ENCODE measurements at regions of chr15 and their contacts with region 1.

Region 1: DNA sequence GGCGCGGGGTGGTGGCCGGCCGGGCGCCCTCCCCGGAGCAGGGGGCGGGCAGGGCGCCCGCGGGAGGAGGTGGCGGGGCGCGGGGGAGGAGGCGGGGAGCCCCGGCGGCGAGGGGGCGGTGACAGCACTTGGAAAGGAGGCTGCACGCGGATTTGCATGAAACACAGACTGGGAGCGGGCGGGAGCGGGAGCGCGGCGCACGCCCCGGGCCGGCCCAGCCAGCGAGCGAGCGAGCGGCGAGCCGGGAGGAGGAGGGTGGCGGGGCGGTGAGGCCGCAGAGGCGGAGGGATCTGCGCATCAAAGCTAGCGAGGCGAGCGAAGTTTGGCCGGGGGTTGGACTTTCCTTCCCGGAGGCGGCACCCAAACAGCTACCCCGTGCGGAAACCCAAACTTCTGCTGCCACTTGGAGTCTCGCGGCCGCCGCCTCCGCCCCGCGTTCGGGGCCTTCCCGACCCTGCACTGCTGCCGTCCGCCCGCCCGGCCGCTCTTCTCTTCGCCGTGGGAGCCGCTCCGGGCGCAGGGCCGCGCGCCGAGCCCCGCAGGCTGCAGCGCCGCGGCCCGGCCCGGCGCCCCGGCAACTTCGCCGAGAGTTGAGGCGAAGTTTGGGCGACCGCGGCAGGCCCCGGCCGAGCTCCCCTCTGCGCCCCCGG is at the start of gene SMAD3:
- DNase-seq: peak; percentile 93
- H3K4me3 ChIP-seq: peak within 1 kb of the TSS; percentile 57 to 87 (median 83)
- H3K27ac ChIP-seq: peak within 1 kb of the TSS; percentile 89
- H3K4me1 ChIP-seq: peaks cover 31% of the 10 kb centered on the region
- H3K27me3 ChIP-seq: no peaks in the 10 kb centered on the region
- CTCF ChIP-seq: peak in 1 of 2 donors; percentile 6
- POLR2A ChIP-seq: peak; percentile 80
- total RNA-seq, gene SMAD3: 71.7 and 88.2 TPM in 2 replicates

Region 2: DNA sequence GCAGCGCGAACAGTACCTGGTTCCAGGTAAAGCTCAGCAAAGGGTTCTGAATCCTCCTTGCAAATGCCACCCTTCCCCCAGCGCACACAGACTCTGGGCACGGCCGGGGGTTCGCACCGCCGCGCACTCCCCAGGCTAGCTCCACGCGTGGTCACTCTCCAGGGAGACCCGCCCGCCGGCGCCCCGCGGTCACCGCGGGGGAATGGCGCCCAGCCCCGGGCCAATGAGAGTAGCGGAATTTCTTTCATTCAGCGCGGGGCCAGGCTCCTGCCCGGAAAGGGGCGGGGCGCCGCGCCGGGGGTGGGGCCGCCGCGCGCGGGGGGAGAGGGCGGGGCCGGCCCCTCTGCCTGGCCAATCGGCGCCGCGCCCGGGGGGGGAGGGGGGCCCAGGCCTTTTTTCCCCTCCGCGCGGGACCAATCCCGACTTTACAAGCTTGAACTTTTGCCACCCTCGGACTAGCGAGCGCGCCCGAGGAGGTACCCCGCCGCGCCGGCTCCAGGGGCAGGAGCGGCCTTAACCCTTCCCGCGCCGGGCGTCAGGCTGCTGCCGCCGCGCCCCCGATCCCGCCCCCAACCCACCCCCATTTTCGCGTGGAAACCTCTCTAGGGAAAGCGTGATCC is 364.7 kb before region 1 on chr15:
- CTCF ChIA-PET with region 1: no interaction called
- POLR2A ChIA-PET with region 1: no interaction called
- dilution Hi-C with region 1: no loop called
- intact Hi-C with region 1: no loop called
- DNase-seq: peak; percentile 94
- H3K4me3 ChIP-seq: peak overlapping the region; percentile 8 to 79 (median 46)
- H3K27ac ChIP-seq: peak overlapping the region; percentile 92
- H3K4me1 ChIP-seq: peaks cover 28% of the 10 kb centered on the region
- H3K27me3 ChIP-seq: no peaks in the 10 kb centered on the region
- CTCF ChIP-seq: no peak
- POLR2A ChIP-seq: peak; percentile 48

Region 3: GRCh38 chr15:66899555-66900350 is 165.8 kb before region 1 on chr15:
- CTCF ChIA-PET with region 1: no interaction called
- POLR2A ChIA-PET with region 1: no interaction called
- dilution Hi-C with region 1: no loop called
- intact Hi-C with region 1: no loop called
- DNase-seq: no peak
- H3K4me3 ChIP-seq: no peak overlapping the region
- H3K27ac ChIP-seq: no peak overlapping the region
- H3K4me1 ChIP-seq: peaks cover 6% of the 10 kb centered on the region
- H3K27me3 ChIP-seq: no peaks in the 10 kb centered on the region
- CTCF ChIP-seq: no peak
- POLR2A ChIP-seq: no peak

Region 4: DNA sequence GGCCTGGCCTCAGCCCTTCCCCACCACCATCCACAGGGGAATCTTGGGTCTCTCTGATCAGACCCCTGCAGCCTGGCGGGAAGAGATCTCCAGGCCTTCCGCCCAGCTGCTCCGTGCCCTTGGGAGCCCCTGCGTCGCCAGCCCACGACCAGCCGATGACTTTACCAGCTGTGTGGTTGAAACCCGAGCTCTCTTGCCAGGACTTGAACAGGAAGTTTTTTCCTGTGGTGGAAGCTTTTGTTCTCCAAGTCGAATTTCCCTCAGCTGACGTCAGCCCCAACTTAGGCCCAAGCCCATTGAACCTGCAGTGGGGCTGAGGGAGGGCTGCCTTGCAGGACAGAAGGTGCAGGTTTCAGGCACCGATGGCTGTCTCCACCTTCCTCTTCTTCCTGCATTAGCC is 51.9 kb before region 1 on chr15:
- CTCF ChIA-PET with region 1: no interaction called
- POLR2A ChIA-PET with region 1: no interaction called
- dilution Hi-C with region 1: no loop called
- intact Hi-C with region 1: loop called (anchors 2 kb)
- DNase-seq: peak; percentile 97
- H3K4me3 ChIP-seq: no peak overlapping the region
- H3K27ac ChIP-seq: peak overlapping the region; percentile 73
- H3K4me1 ChIP-seq: peaks cover 21% of the 10 kb centered on the region
- H3K27me3 ChIP-seq: no peaks in the 10 kb centered on the region
- CTCF ChIP-seq: no peak
- POLR2A ChIP-seq: peak; percentile 60

Region 5: DNA sequence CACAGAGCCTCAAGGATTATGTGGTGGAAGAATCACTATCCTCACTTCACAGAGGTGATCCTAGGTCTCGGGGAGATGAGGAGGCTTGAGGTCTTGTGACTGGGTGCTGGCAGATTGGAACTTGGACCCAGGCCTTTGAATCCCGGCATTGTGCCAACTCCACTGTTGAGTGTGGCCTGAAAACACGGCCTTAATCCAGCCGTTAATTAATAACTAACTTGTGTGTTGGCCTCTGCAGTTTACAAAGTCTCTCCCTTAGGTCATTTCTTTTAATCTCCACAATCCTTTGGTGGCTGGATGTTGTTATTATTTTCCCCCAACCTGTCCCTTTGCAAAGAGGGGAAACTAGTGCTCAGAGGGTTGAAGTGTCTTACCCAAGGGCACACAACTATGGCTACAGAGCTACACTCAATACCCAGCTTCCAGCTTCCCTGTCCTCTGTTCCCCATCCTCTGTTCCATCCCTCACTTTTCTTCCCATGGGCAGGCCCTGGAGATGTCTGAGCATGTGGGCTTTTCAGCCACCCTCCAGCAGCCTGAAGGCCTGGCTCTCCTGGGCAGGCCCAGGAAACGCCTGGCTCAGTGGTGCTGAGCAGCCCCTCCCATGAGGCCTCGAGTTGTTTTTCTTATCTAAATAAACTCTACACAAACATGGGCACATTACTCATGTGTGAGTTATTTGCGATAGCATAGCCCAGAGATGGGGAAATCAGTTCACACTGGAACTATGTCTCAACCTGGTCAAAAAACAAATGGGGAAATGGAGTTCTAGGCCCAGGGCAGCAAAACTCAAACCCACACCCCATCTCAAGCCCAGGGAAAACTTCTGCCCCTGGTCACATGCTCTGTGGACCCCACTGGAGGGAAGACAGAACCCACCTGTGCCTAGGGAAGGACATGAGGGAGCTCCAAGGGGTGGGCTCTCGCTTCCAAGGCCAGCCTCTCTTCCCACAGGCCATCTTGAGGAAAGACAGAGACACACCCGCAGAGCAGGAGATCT is 17.0 kb before region 1 on chr15:
- CTCF ChIA-PET with region 1: interaction called, 7 read pairs
- POLR2A ChIA-PET with region 1: interaction called, 7 read pairs
- dilution Hi-C with region 1: no loop called
- intact Hi-C with region 1: loop called (anchors 1 kb)
- DNase-seq: peak; percentile 68
- H3K4me3 ChIP-seq: no peak overlapping the region
- H3K27ac ChIP-seq: peak overlapping the region; percentile 93
- H3K4me1 ChIP-seq: peaks cover 29% of the 10 kb centered on the region
- H3K27me3 ChIP-seq: no peaks in the 10 kb centered on the region
- CTCF ChIP-seq: no peak
- POLR2A ChIP-seq: no peak

Region 6: GRCh38 chr15:67091071-67091979 is 25.8 kb after region 1 on chr15:
- CTCF ChIA-PET with region 1: no interaction called
- POLR2A ChIA-PET with region 1: interaction called, 3 read pairs
- dilution Hi-C with region 1: no loop called
- intact Hi-C with region 1: loop called (anchors 1 kb)
- DNase-seq: peak; percentile 99
- H3K4me3 ChIP-seq: peak overlapping the region in 1 of 3 experiments; percentile 2
- H3K27ac ChIP-seq: peak overlapping the region; percentile 99
- H3K4me1 ChIP-seq: peaks cover 57% of the 10 kb centered on the region
- H3K27me3 ChIP-seq: no peaks in the 10 kb centered on the region
- CTCF ChIP-seq: no peak
- POLR2A ChIP-seq: peak; percentile 61

Region 7: DNA sequence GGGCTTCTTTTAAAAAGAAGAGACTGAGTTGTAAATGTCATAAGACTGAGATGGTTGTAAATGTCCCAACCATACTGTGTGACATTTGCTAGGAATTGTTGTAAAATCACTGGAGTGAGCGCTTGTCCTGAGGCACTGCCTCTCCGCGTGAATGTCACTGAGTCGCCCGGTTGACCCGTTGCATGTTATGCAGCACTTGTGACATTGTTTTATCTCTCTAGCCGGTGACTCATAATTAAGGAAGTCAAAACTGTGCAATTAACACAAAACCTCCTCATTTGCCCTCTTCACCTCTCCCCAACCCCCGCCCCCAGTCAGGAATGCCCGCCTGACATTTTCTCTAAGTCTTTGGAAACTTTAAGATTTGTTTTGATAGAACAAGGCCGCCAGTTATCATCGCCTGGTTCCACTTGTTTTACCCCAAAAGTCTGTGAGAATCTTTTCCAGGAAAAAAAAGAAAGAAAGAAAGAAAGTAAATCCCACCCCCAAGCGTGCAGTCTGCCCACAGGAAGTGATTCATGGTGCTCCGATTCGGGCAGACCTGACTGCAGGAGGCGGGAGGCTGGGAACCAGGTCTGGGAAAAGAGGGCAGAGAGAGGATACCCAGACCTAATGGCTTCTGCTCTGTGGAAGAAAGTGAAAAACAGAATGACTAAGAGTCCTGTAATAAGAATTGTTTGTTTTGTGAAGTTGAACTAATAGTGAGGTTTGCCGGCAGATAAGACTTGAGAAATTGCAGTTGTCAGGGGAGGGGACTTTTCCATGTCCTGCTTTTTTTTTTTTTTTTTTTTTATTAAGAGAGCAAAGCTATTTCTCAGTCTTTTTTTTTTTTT is 84.7 kb after region 1 on chr15:
- CTCF ChIA-PET with region 1: no interaction called
- POLR2A ChIA-PET with region 1: interaction called, 3 read pairs
- dilution Hi-C with region 1: no loop called
- intact Hi-C with region 1: loop called (anchors 2 kb)
- DNase-seq: peak; percentile 99
- H3K4me3 ChIP-seq: peak overlapping the region in 2 of 3 experiments; percentile 5 to 30
- H3K27ac ChIP-seq: peak overlapping the region; percentile 100
- H3K4me1 ChIP-seq: peaks cover 53% of the 10 kb centered on the region
- H3K27me3 ChIP-seq: no peaks in the 10 kb centered on the region
- CTCF ChIP-seq: no peak
- POLR2A ChIP-seq: no peak

Region 8: DNA sequence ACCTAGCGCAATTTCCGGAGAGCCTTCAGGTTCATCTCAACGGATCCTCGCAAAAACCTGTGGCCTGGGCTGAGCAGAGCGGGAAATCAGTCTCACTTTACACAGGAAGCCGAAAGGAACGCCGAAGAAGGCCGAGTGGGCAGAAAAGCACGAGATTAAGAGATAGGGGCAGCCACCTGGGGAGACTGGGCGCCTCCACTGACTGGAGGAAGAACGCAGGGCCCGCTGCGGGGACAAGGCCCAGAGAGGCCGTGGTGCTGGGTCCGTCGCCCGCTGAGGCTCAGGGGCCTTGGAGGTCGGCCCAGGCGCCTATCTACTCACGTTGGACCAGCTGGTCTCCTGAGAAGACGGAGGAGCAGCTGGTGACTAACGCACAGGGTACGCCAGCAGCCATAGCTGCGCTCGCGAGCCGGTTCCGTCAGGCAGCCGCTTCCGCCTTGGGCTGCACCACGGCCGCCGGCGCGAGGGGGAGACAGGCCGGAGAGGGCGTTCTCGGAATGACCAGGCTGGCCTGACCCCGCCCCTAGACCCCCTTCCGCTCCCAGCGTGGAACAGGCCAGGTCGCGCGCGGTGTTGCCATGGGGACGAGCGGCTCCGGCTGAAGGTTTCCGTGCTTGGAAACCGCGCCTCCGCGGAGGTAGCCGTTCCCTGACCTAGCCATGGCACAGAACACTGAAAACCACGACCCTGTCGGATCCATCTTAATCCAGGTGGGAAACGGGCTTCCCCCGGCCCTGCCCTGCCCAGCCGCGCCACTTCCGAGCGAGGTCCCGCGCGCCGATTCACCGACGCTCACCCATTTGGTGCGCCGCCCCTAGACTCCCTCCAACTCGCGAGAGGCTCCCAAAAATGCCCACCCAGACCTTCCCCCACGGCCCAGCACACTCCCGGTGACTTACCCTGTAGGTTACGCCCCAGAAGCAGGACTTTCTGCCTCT is 188.9 kb after region 1 on chr15 and contains the starts of genes AAGAB and IQCH:
- CTCF ChIA-PET with region 1: no interaction called
- POLR2A ChIA-PET with region 1: no interaction called
- dilution Hi-C with region 1: no loop called
- intact Hi-C with region 1: loop called (anchors 2 kb)
- DNase-seq: peak; percentile 98
- H3K4me3 ChIP-seq: peak within 1 kb of the TSS; percentile 90 to 97 (median 95)
- H3K27ac ChIP-seq: peak within 1 kb of the TSS; percentile 93
- H3K4me1 ChIP-seq: peaks cover 7% of the 10 kb centered on the region
- H3K27me3 ChIP-seq: no peaks in the 10 kb centered on the region
- CTCF ChIP-seq: no peak
- POLR2A ChIP-seq: peak; percentile 84
- total RNA-seq, gene AAGAB: 38.0 and 42.6 TPM in 2 replicates
- total RNA-seq, gene IQCH: 0.51 and 2.6 TPM in 2 replicates

Region 9: GRCh38 chr15:67433495-67434099 is 368.0 kb after region 1 on chr15:
- CTCF ChIA-PET with region 1: interaction called, 3 read pairs
- POLR2A ChIA-PET with region 1: no interaction called
- dilution Hi-C with region 1: no loop called
- intact Hi-C with region 1: loop called (anchors 10 kb)
- DNase-seq: peak; percentile 66
- H3K4me3 ChIP-seq: no peak overlapping the region
- H3K27ac ChIP-seq: no peak overlapping the region
- H3K4me1 ChIP-seq: no peaks in the 10 kb centered on the region
- H3K27me3 ChIP-seq: no peaks in the 10 kb centered on the region
- CTCF ChIP-seq: peak; percentile 69 to 77
- POLR2A ChIP-seq: no peak